ENCODE measurements at regions of chr16 and their contacts with region 1.

Region 1: GRCh38 chr16:74309789-74310781 is 13.5 kb downstream of the PSMD7 start:
- DNase-seq: peak; percentile 45
- H3K4me3 Mint-ChIP-seq: no peak overlapping the region
- H3K27ac Mint-ChIP-seq: no peak overlapping the region
- H3K4me1 Mint-ChIP-seq: no peaks in the 10 kb centered on the region
- H3K27me3 Mint-ChIP-seq: no peaks in the 10 kb centered on the region

Region 2: GRCh38 chr16:74296432-74297144 is 13.5 kb before region 1 on chr16 and contains the start of gene PSMD7:
- CTCF ChIA-PET with region 1: interaction called, 15 read pairs
- DNase-seq: peak; percentile 93
- H3K4me3 Mint-ChIP-seq: peak within 1 kb of the TSS; percentile 94
- H3K27ac Mint-ChIP-seq: peak within 1 kb of the TSS; percentile 93
- H3K4me1 Mint-ChIP-seq: peaks cover 36% of the 10 kb centered on the region
- H3K27me3 Mint-ChIP-seq: no peaks in the 10 kb centered on the region

Region 3: GRCh38 chr16:74448992-74449434 is 138.9 kb after region 1 on chr16:
- CTCF ChIA-PET with region 1: no interaction called
- DNase-seq: no peak
- H3K4me3 Mint-ChIP-seq: no peak overlapping the region
- H3K27ac Mint-ChIP-seq: peak overlapping the region; percentile 20
- H3K4me1 Mint-ChIP-seq: peaks cover 5% of the 10 kb centered on the region
- H3K27me3 Mint-ChIP-seq: no peaks in the 10 kb centered on the region